Posterior vena cava (tissue), 2 donors: ENCODE measurements at regions of chr1 and their contacts with region 1.

Region 1: GRCh38 chr1:55768327-55768952 is 553.3 kb upstream of the USP24 start:
- DNase-seq: no peak

Region 2: GRCh38 chr1:55718758-55719671 is 49.4 kb before region 1 on chr1:
- intact Hi-C with region 1: loop called in 1 of 2 experiments (anchors 10 kb)
- DNase-seq: peak; percentile 87

Region 3: DNA sequence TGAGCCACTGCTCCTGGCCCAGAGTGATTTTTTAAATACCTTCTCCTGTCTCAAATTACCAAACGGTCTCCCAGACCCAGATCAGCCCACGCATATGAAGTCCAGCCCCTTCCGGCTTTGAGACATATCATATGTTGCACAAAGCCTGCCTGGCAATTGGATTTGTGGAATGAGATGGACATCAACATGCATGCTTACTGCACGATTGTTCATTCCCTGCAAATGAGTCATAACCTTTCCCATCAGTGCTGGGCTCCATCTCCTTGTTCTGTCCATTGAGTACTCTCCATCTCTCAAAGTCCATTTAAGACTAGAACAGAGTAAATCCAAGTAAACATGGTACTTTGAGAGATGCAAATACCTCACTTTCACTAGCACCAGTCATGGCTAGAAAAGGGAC is 58.9 kb after region 1 on chr1:
- intact Hi-C with region 1: no loop called
- DNase-seq: no peak

Region 4: GRCh38 chr1:55904541-55904940 is 136.1 kb after region 1 on chr1:
- intact Hi-C with region 1: no loop called
- DNase-seq: no peak